K562 (cell line): ENCODE measurements at regions of chr3 and their contacts with region 1.

Region 1: DNA sequence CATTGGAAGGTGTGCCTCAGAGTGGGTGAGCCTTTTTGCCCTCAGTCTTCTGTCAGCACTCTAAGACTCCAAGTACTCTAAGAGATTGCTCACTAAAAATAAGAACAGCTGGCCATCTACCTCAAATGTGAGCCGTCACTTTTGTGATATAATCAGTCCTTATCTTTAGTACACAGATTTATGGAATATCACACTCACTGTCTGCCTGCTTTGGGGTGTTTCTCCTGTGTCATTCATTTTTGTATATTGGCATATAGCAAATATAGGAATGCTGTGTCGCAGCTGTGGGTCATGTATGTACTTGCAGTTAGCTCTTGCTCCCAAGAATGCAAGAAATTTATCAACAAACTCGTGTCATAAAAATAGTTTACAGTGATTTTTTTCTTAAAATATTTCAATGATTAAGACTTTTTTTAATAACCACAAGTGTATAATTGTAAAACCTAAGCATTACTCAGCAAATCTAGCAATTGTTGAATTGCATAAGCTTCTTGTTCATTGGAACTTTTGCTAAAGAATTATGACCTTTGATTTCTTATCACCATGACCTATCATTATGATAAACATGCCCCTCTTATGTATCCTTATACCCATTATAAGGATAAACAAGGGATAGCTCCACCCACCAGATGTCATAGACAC is 18.8 kb downstream of the SETD5 start:
- DNase-seq: no peak
- ATAC-seq: peak; percentile 11
- H3K4me3 ChIP-seq: no peak overlapping the region
- H3K27ac ChIP-seq: peak overlapping the region; percentile 11; the same call in 1 of the 3 replicates
- H3K4me1 ChIP-seq: peaks cover 4 to 34% of the 10 kb centered on the region in 2 experiments
- H3K27me3 ChIP-seq: no peaks in the 10 kb centered on the region
- CTCF ChIP-seq: no peak
- EP300 ChIP-seq: peak; percentile 34; the same call in 1 of the 2 replicates
- POLR2A ChIP-seq: no peak
- RAD21 ChIP-seq: no peak

Region 2: GRCh38 chr3:9402410-9403228 is 13.6 kb before region 1 on chr3:
- CTCF ChIA-PET with region 1: no interaction called
- POLR2A ChIA-PET with region 1: interaction called, 150 read pairs
- in situ Hi-C with region 1: no loop called
- intact Hi-C with region 1: no loop called
- DNase-seq: peak; percentile 48 to 95 (median 66)
- ATAC-seq: peak; percentile 76
- H3K4me3 ChIP-seq: peak overlapping the region; percentile 19
- H3K27ac ChIP-seq: peak overlapping the region; percentile 63
- H3K4me1 ChIP-seq: peaks cover 3 to 36% of the 10 kb centered on the region in 2 experiments; a peak in 4 of 5 replicates
- H3K27me3 ChIP-seq: no peaks in the 10 kb centered on the region
- CTCF ChIP-seq: no peak
- EP300 ChIP-seq: peak; percentile 71
- POLR2A ChIP-seq: no peak
- RAD21 ChIP-seq: peak in 1 of 2 experiments; percentile 25; a peak in 1 of 4 replicates